Adrenal gland (tissue), 19 donors: ENCODE measurements at regions of chr4 and their contacts with region 1.

Region 1: DNA sequence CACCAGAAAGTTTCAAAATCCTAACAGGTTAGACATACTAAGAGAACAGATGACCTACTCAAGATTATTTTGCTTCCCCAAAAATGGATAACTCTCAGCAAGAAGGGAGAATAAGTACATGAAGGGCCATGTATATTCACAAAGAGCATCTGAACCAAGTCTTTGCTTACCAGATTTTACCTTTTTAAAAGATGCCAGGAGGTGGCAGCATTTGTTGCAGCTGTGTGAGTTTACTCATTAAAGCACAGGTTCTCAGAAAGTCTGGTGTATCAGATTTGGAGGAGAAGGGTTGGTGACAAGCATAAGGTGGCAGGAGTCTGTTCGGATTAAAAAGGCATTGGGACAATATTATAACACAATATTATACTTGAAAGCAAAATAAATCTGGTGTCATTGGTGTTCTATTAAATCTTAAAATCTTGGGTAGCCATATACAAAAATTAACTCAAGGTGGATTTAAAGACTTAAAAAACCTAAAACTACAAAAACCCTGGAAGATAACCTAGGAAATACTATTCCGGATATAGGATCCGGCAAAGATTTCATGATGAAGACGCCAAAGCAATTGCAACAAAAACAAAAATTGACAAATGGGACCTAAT is 51.3 kb upstream of the NFKB1 start:
- DNase-seq: peak; percentile 23 to 70 (median 46)
- H3K4me3 ChIP-seq: no peak overlapping the region
- H3K27ac ChIP-seq: no peak overlapping the region
- H3K4me1 ChIP-seq: no peaks in the 10 kb centered on the region
- H3K27me3 ChIP-seq: no peaks in the 10 kb centered on the region
- CTCF ChIP-seq: peak; percentile 39 to 76 (median 68)
- POLR2A ChIP-seq: no peak

Region 2: GRCh38 chr4:102217345-102217744 is 232.5 kb before region 1 on chr4:
- intact Hi-C with region 1: no loop called
- DNase-seq: no peak
- H3K4me3 ChIP-seq: no peak overlapping the region
- H3K27ac ChIP-seq: no peak overlapping the region
- H3K4me1 ChIP-seq: no peaks in the 10 kb centered on the region
- H3K27me3 ChIP-seq: no peaks in the 10 kb centered on the region
- CTCF ChIP-seq: no peak
- POLR2A ChIP-seq: no peak

Region 3: GRCh38 chr4:102390438-102390837 is 59.4 kb before region 1 on chr4:
- intact Hi-C with region 1: no loop called
- DNase-seq: no peak
- H3K4me3 ChIP-seq: no peak overlapping the region
- H3K27ac ChIP-seq: no peak overlapping the region
- H3K4me1 ChIP-seq: no peaks in the 10 kb centered on the region
- H3K27me3 ChIP-seq: no peaks in the 10 kb centered on the region
- CTCF ChIP-seq: no peak
- POLR2A ChIP-seq: no peak

Region 4: DNA sequence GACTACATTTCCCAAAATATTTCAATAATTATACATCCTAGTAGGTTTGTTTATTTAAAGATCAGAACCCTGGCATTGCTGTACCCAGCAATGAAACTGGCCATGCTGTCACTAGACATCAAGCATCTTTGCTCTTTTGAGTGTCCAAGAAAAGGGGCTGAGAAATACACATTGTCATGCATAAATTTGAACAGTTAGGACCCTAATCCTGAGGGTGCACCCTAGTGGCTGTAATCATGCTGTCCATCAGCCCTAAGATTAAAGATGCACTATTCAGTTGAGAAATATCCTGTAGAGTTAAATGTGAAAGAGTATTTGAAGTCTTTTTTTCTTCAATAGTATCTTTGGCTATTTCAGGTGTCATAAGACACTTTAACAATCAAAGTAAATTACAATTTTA is 160.2 kb after region 1 on chr4:
- intact Hi-C with region 1: loop called (anchors 5 to 10 kb)
- DNase-seq: no peak
- H3K4me3 ChIP-seq: no peak overlapping the region
- H3K27ac ChIP-seq: no peak overlapping the region
- H3K4me1 ChIP-seq: no peaks in the 10 kb centered on the region
- H3K27me3 ChIP-seq: no peaks in the 10 kb centered on the region
- CTCF ChIP-seq: peak in 1 of 6 experiments; percentile 27
- POLR2A ChIP-seq: no peak

Region 5: DNA sequence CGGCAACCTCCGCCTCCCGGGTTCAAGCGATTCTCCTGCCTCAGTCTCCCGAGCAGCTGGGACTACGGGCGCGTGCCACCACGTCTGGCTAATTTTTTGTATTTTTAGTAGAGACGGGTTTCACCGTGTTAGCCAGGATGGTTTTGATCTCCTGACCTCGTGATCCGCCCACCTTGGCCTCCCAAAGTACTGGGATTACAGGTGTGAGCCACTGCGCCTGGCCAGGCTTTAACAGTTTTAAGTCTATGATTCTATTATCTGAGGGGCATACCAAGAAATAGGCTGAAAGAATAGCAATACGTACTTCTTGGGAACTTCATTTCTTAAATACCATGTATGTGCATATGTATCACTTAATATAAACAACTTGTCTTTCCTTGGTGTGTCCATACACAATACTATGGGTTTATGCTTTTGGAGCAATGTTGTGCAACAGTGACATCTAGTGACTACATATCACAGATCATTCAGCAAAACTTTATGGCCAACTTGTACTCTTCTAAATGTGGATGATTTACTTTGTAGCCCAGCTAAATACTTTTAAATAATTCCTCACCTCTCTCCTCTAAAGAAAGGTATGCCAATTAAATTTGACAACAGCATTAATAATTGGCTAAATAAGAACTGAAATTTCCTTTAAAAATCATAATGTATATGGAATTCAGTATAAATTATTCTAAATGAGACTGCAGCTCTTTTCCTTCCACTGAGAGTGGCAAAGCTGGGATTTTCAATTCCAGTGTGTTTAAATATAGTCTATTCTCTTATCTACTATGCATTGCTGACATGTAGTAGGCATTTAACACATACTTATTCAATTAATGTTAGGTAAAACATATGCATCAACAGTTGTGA is 559.2 kb after region 1 on chr4:
- intact Hi-C with region 1: loop called in 1 of 2 experiments (anchors 10 kb)
- DNase-seq: peak in 3 of 7 donors; percentile 20 to 40 (median 36)
- H3K4me3 ChIP-seq: no peak overlapping the region
- H3K27ac ChIP-seq: no peak overlapping the region
- H3K4me1 ChIP-seq: peaks cover 8 to 16% of the 10 kb centered on the region in 2 donors
- H3K27me3 ChIP-seq: no peaks in the 10 kb centered on the region
- CTCF ChIP-seq: peak; percentile 23 to 87 (median 82)
- POLR2A ChIP-seq: no peak

Region 6: DNA sequence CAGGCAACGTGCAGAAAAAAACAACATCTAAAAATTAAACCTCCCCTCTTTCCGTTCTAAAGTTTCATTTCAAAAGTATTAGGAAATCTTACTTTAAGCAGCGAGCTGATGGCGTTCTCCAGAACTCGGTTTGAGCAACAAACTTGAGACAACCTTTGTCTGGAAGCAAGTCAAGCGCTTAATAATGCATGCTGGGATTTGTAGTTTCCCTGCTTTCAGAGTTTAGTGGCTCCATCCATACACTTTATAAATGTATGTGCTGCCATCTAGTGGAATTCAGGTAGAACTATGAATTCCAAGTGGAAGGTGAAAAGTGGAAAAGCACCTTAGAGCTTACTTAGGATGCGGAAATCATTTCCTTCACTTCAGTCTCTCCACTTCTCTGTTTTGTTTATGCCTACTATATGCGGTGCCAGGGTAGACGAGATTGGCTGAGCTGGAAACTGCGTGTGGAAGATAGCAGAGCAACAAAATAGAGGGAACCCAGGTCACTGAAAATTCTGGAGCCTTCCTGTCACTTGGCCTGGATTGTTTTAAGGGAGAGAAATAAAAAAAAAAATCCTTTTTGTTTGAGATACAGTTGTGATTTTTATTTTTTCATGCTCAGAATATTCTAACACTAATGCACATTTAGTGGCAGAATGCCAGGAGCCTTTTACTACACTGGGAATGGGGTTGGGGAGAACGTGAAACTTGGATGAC is 650.0 kb after region 1 on chr4 and contains the start of gene BDH2:
- intact Hi-C with region 1: loop called in 1 of 2 experiments (anchors 10 kb)
- DNase-seq: peak; percentile 59 to 85 (median 70)
- H3K4me3 ChIP-seq: peak within 1 kb of the TSS; percentile 5 to 62 (median 48)
- H3K27ac ChIP-seq: peak within 1 kb of the TSS; percentile 37 to 78 (median 67)
- H3K4me1 ChIP-seq: peaks cover 18 to 29% of the 10 kb centered on the region in 2 donors
- H3K27me3 ChIP-seq: no peaks in the 10 kb centered on the region
- CTCF ChIP-seq: peak; percentile 79 to 91 (median 84)
- POLR2A ChIP-seq: peak in 1 of 2 donors; percentile 85
- total RNA-seq, gene BDH2: 84.6 to 209 (median 115) TPM